Calu3 (cell line): ENCODE measurements at regions of chr14 and their contacts with region 1.

Region 1: GRCh38 chr14:92607702-92608429 is 94.3 kb downstream of the RIN3 start:
- DNase-seq: no peak
- H3K4me3 Mint-ChIP-seq: no peak overlapping the region
- H3K27ac Mint-ChIP-seq: no peak overlapping the region
- H3K4me1 Mint-ChIP-seq: peaks cover 8% of the 10 kb centered on the region
- H3K27me3 Mint-ChIP-seq: no peaks in the 10 kb centered on the region
- CTCF ChIP-seq: no peak

Region 2: GRCh38 chr14:92675976-92676375 is 68.1 kb after region 1 on chr14:
- CTCF ChIA-PET with region 1: no interaction called
- intact Hi-C with region 1: loop called (anchors 2 kb)
- DNase-seq: no peak
- H3K4me3 Mint-ChIP-seq: no peak overlapping the region
- H3K27ac Mint-ChIP-seq: no peak overlapping the region
- H3K4me1 Mint-ChIP-seq: no peaks in the 10 kb centered on the region
- H3K27me3 Mint-ChIP-seq: no peaks in the 10 kb centered on the region
- CTCF ChIP-seq: no peak

Region 3: DNA sequence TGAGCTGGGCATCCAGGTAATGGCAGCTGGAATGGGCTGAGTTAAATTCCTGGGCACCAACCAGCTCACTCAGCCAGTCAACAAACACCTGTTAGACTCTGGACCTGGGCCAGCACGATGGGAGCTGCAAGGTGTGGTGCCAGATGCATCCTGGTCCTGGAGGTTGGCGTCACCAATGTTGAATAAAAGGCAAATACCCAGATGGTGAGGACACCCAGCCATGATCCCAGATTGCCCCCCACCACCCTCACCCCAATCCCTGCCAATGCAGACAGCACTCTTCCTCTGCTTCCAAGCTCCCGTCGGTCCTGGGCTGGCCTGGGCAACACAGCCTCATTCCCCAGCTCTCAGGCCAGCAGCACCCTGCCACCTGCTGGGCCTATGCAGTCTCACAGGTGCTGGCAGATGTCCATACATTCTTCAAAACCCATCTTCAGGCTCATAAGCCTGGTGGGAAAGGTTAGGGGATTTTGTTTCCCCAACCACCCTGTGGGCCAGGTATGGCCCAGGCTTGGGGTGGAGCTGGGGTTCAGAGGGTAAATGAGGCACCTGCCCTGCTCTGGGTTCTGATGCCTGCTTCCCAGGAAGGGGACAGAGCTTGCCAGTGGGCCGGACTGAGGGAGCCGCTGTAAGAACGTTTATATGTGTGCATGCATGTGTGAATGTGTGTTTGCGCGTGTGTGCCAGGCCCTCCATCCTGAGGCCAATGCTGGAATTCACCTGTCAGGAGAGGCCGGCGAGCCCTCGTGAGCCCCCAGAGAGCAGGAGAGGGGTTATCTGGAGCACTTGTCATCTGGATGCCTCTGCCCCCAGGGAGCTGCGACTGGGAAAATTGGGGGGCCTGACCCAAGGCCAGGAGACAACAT is 82.5 kb after region 1 on chr14:
- CTCF ChIA-PET with region 1: no interaction called
- intact Hi-C with region 1: no loop called
- DNase-seq: peak; percentile 64
- H3K4me3 Mint-ChIP-seq: no peak overlapping the region
- H3K27ac Mint-ChIP-seq: no peak overlapping the region
- H3K4me1 Mint-ChIP-seq: no peaks in the 10 kb centered on the region
- H3K27me3 Mint-ChIP-seq: peaks cover 17% of the 10 kb centered on the region
- CTCF ChIP-seq: peak; percentile 41